ENCODE measurements at regions of chr11 and their contacts with region 1.

Region 1: GRCh38 chr11:90532125-90532524 is 309.3 kb upstream of the CHORDC1 start:
- DNase-seq: no peak
- ATAC-seq: no peak
- H3K4me3 ChIP-seq: no peak overlapping the region
- H3K27ac ChIP-seq: no peak overlapping the region
- H3K4me1 ChIP-seq: no peaks in the 10 kb centered on the region
- H3K27me3 ChIP-seq: no peaks in the 10 kb centered on the region
- CTCF ChIP-seq: no peak
- EP300 ChIP-seq: no peak
- POLR2A ChIP-seq: no peak
- RAD21 ChIP-seq: no peak

Region 2: GRCh38 chr11:90178760-90179159 is 353.4 kb before region 1 on chr11:
- CTCF ChIA-PET with region 1: no interaction called
- POLR2A ChIA-PET with region 1: interaction called, 10 read pairs
- RAD21 ChIA-PET with region 1: no interaction called
- SMC1A ChIA-PET with region 1: no interaction called
- in situ Hi-C with region 1: no loop called
- intact Hi-C with region 1: no loop called
- DNase-seq: no peak
- ATAC-seq: no peak
- H3K4me3 ChIP-seq: no peak overlapping the region
- H3K27ac ChIP-seq: no peak overlapping the region
- H3K4me1 ChIP-seq: no peaks in the 10 kb centered on the region
- H3K27me3 ChIP-seq: no peaks in the 10 kb centered on the region
- CTCF ChIP-seq: no peak
- EP300 ChIP-seq: no peak
- POLR2A ChIP-seq: no peak
- RAD21 ChIP-seq: no peak

Measured in GM12878 (cell line).